ENCODE measurements at regions of chr2 and their contacts with region 1.

Region 1: GRCh38 chr2:174039551-174040416 is 74.6 kb upstream of the SP3 start:
- DNase-seq: peak; percentile 93
- ATAC-seq: peak; percentile 89 to 90

Region 2: DNA sequence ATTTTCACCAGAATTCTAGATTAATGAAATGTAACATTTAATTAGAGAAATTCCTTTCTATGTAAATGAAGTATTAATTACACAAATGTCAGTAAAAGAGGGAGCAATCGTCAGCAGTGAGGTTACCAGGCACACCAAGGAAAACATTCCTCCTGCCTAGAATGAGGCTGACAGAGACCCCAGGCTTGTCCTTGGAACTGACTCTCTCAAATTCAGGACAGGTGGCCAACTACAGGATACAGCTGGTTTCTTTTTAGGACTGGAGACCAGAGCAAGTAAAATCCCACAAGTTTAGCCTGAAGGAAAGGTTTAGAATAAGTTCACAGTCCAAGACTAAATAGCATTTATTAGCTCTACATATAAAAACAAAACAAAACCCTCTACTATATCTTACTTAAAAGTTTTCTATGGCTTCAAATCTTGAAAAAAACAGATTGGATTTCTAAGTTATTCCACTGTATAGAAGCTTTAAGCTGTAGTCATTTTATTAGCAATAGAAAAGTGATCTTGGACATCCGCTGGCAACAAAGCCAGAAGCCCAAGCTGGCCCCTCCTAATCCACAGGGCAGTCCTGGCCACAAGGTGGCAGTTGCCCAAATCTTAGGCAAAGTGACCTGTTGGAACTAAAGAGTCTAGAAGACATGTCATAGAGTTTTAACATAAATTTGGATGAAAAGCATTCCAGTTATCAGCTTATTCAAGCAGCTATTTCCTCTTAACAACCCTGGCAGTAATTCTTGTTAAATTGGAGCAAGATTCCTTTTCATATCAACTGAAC is 155.6 kb before region 1 on chr2:
- intact Hi-C with region 1: loop called (anchors 10 kb)
- DNase-seq: peak; percentile 65
- ATAC-seq: peak; percentile 66 to 79

Region 3: GRCh38 chr2:173965329-173966025 is 74.3 kb before region 1 on chr2 and contains the start of gene SP3:
- intact Hi-C with region 1: loop called in 1 of 2 experiments (anchors 5 kb)
- DNase-seq: peak; percentile 98
- ATAC-seq: peak; percentile 90 to 91
- total RNA-seq, gene SP3: 42.9 to 49.0 TPM

Region 4: DNA sequence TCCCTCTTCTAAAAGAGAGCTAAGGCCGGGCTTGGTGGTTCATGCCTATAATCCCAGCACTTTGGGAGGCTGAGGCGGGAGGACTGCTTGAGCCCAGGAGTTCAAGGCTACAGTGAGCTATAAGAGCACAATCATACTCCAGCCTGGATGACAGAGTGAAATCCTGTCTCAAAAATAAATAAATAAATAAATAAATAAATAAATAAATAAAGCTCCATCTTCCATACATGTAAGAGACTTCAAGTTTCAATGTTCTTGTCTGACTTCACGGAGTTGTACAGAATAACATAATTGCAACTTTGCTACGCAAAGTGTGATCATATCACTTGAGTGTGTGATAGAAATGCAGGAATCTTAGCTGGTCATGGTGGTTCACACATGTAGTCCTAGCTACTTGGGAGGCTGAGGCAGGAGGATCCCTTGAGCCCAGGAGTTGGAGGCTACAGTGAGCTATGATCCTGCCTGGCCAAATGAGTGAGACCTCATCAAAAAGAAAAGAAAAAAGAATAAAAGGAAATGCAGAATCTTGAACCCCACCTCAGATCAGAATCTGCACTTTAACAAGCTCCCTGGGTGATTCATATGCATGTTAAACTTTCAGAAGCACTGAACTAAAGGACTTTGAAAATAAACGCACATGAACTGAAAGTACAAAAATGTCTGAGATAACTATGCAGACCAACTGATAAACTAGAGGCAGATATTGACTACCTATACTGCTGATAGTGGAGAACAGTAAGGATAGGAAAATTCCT is 49.1 kb after region 1 on chr2:
- intact Hi-C with region 1: no loop called
- DNase-seq: no peak
- ATAC-seq: no peak

Measured in left cardiac atrium (tissue), 4 donors.